ENCODE measurements at regions of chr1 and their contacts with region 1.

Region 1: GRCh38 chr1:240732390-240732789 is 120.4 kb upstream of the GREM2 start:
- DNase-seq: peak in 1 of 2 experiments; percentile 40
- H3K4me3 ChIP-seq: no peak overlapping the region
- H3K4me3 Mint-ChIP-seq: no peak overlapping the region
- H3K27ac Mint-ChIP-seq: no peak overlapping the region
- H3K4me1 ChIP-seq: no peaks in the 10 kb centered on the region
- H3K4me1 Mint-ChIP-seq: no peaks in the 10 kb centered on the region
- H3K27me3 ChIP-seq: no peaks in the 10 kb centered on the region
- H3K27me3 Mint-ChIP-seq: no peaks in the 10 kb centered on the region
- CTCF ChIP-seq: peak; percentile 71 to 72

Region 2: DNA sequence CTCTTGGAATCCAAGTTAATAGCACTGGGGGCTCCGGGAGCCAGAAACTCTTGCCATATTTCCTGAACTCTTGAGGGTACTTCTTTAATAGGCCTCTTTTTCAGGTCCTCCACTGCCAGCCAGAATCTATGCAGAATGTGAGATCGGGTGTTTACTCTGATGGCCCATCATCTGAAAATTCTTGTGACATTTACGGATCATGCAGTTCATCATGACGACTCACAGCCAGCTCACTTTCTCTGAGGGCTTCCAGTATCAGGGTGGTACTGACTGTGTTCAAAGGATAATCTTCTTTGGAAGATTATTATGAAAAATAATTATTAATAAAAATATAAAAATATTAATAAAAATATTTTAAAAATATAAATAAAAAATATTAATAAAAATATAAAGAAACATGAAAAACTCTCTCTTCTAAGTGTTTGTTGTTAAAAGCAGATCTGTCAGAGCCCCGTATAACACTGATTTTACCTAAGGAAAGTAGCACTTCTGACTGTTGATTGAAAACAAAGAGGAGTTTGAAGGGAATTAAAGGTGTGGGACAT is 73.9 kb after region 1 on chr1:
- CTCF ChIA-PET with region 1: no interaction called
- POLR2A ChIA-PET with region 1: no interaction called
- intact Hi-C with region 1: loop called (anchors 5 kb)
- DNase-seq: no peak
- H3K4me3 ChIP-seq: no peak overlapping the region
- H3K4me3 Mint-ChIP-seq: no peak overlapping the region
- H3K27ac Mint-ChIP-seq: no peak overlapping the region
- H3K4me1 ChIP-seq: no peaks in the 10 kb centered on the region
- H3K4me1 Mint-ChIP-seq: no peaks in the 10 kb centered on the region
- H3K27me3 ChIP-seq: no peaks in the 10 kb centered on the region
- H3K27me3 Mint-ChIP-seq: no peaks in the 10 kb centered on the region
- CTCF ChIP-seq: no peak

Region 3: GRCh38 chr1:240888039-240888786 is 155.8 kb after region 1 on chr1:
- CTCF ChIA-PET with region 1: interaction called, 7 read pairs
- POLR2A ChIA-PET with region 1: no interaction called
- intact Hi-C with region 1: loop called (anchors 1 kb)
- DNase-seq: peak; percentile 59 to 70
- H3K4me3 ChIP-seq: no peak overlapping the region
- H3K4me3 Mint-ChIP-seq: no peak overlapping the region
- H3K27ac Mint-ChIP-seq: no peak overlapping the region
- H3K4me1 ChIP-seq: no peaks in the 10 kb centered on the region; the same call in 1 of the 2 replicates
- H3K4me1 Mint-ChIP-seq: no peaks in the 10 kb centered on the region
- H3K27me3 ChIP-seq: no peaks in the 10 kb centered on the region
- H3K27me3 Mint-ChIP-seq: no peaks in the 10 kb centered on the region
- CTCF ChIP-seq: peak; percentile 73 to 88

Region 4: DNA sequence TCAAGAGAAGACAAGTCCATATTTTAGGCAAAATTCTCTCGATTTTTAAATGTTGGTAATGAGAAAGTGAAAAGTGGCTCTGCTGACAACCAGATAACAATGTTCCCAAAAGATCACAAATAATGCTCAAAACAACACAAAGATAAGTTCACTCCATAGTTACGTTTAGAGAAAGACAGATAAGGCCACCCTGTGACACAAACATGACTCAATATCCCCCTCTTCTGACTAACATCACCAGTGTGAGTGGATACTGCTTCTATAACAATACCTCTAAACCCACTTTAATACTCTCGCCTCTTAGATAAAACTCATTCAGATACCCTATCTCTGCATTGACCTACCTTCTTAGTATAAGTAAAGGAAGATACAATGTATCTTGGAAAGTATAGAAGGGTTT is 675.8 kb after region 1 on chr1:
- CTCF ChIA-PET with region 1: no interaction called
- POLR2A ChIA-PET with region 1: no interaction called
- intact Hi-C with region 1: loop called (anchors 5 kb)
- DNase-seq: peak in 1 of 2 experiments; percentile 4
- H3K4me3 ChIP-seq: no peak overlapping the region
- H3K4me3 Mint-ChIP-seq: no peak overlapping the region
- H3K27ac Mint-ChIP-seq: no peak overlapping the region
- H3K4me1 ChIP-seq: no peaks in the 10 kb centered on the region
- H3K4me1 Mint-ChIP-seq: no peaks in the 10 kb centered on the region
- H3K27me3 ChIP-seq: no peaks in the 10 kb centered on the region
- H3K27me3 Mint-ChIP-seq: peaks cover 6% of the 10 kb centered on the region
- CTCF ChIP-seq: peak; percentile 18 to 28

Region 5: GRCh38 chr1:241485554-241485992 is 753.2 kb after region 1 on chr1:
- CTCF ChIA-PET with region 1: no interaction called
- POLR2A ChIA-PET with region 1: no interaction called
- intact Hi-C with region 1: loop called (anchors 1 kb)
- DNase-seq: peak in 1 of 2 experiments; percentile 13
- H3K4me3 ChIP-seq: no peak overlapping the region
- H3K4me3 Mint-ChIP-seq: no peak overlapping the region
- H3K27ac Mint-ChIP-seq: no peak overlapping the region
- H3K4me1 ChIP-seq: no peaks in the 10 kb centered on the region
- H3K4me1 Mint-ChIP-seq: no peaks in the 10 kb centered on the region
- H3K27me3 ChIP-seq: no peaks in the 10 kb centered on the region
- H3K27me3 Mint-ChIP-seq: no peaks in the 10 kb centered on the region
- CTCF ChIP-seq: peak; percentile 40 to 63

Region 6: DNA sequence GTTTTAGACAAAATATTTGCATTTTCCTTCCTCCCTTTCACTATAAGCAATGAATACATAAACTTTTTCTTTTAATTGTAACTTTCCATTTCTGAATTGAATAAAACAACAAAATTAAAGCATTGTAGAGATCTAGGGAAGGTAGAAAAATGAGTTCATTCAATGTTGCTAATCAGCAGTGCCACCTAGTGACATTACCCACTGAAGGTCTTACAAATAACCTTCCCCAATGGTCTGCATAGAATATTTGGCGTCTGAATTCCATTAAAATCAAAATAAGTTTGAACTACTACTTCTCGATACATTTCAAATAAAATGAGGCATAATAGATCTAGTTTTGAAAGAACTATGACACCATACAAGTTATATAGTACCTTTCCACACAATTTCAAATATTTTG is 767.5 kb after region 1 on chr1:
- CTCF ChIA-PET with region 1: no interaction called
- POLR2A ChIA-PET with region 1: no interaction called
- intact Hi-C with region 1: loop called (anchors 1 kb)
- DNase-seq: no peak
- H3K4me3 ChIP-seq: no peak overlapping the region
- H3K4me3 Mint-ChIP-seq: no peak overlapping the region
- H3K27ac Mint-ChIP-seq: no peak overlapping the region
- H3K4me1 ChIP-seq: no peaks in the 10 kb centered on the region
- H3K4me1 Mint-ChIP-seq: no peaks in the 10 kb centered on the region
- H3K27me3 ChIP-seq: no peaks in the 10 kb centered on the region
- H3K27me3 Mint-ChIP-seq: no peaks in the 10 kb centered on the region
- CTCF ChIP-seq: peak; percentile 34 to 44